Right ventricle myocardium inferior (tissue), 1 donor: ENCODE measurements at regions of chr2 and their contacts with region 1.

Region 1: GRCh38 chr2:191402966-191403565 is 157.9 kb downstream of the MYO1B start:
- DNase-seq: no peak
- ATAC-seq: no peak

Region 2: DNA sequence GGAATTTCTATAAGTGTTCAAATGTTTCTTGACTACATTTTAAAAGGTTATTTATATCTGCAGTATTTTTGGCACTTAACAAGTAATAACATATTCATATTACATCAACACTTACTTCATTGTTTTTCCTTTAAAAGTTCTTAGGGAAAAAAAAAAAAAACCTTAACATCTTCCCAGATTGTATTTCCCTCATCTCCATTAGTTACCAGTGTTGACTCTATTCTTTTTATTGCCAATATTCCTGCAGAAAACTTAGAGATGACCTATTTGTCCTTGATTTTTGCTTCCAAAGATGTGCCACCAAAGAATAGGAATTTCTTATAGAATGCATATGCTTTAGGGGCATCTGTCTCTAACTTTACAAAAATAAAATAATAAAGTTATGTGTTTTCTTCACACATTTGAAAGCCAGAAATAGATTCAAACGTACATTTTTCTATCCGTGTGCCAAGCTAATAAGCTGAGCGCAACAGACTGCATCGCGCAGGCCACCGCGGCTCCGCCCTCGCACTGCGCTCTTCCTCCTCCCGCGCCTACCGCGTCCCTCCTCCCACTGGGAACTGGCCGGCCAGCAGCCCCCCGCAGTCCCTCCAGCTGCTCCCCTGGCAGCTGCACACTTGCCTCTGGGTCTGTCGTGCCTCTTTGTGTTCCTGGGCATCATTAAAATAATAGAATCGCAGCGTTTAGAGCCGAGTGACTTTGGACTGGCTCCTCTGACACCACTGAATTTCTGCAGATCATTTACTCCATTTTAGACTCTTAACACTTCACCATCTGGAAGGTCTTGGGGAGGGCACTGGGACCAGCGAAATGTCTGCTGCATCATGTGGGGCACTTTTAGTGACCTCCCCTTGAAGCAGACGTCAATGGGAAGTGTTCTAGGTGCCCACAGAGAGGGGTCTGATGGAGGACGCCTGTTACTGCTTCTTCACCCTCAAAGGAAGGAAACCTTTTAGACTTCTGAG is 775.3 kb before region 1 on chr2:
- intact Hi-C with region 1: no loop called
- DNase-seq: no peak
- ATAC-seq: peak; percentile 78

Region 3: DNA sequence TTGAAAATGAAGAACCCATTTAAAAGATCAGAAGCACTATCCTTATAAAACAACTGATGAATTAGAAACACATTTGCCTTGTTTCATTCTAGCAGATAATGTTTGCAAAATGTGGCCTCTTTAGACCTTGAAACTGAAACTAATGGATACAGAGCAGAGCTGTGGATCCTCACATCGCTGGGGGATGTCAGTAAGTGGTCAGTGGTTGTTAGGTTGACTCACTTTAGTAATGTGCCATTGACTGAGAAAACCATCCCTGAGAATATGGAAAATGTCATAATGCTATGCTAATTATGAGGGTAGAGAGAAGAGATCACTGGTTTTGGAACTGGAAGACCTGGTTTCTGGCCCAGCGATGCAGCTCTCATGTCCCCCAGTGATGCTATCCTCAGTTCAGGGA is 18.9 kb after region 1 on chr2:
- intact Hi-C with region 1: loop called (anchors 1 kb)
- DNase-seq: no peak
- ATAC-seq: no peak